Dorsolateral prefrontal cortex (tissue), 120 donors: ENCODE measurements at regions of chr11 and their contacts with region 1.

Region 1: GRCh38 chr11:89613911-89614310 is 96.2 kb upstream of the TRIM77 start:
- DNase-seq: no peak
- H3K4me3 ChIP-seq: peak overlapping the region in 17 of 59 donors; percentile 5 to 47 (median 20)
- H3K27ac ChIP-seq: no peak overlapping the region
- H3K27me3 ChIP-seq: no peaks in the 10 kb centered on the region
- CTCF ChIP-seq: no peak

Region 2: GRCh38 chr11:89327885-89328284 is 286.0 kb before region 1 on chr11:
- intact Hi-C with region 1: loop called in 1 of 2 experiments (anchors 10 kb)
- DNase-seq: no peak
- H3K4me3 ChIP-seq: no peak overlapping the region
- H3K27ac ChIP-seq: no peak overlapping the region
- H3K27me3 ChIP-seq: no peaks in the 10 kb centered on the region
- CTCF ChIP-seq: no peak

Region 3: DNA sequence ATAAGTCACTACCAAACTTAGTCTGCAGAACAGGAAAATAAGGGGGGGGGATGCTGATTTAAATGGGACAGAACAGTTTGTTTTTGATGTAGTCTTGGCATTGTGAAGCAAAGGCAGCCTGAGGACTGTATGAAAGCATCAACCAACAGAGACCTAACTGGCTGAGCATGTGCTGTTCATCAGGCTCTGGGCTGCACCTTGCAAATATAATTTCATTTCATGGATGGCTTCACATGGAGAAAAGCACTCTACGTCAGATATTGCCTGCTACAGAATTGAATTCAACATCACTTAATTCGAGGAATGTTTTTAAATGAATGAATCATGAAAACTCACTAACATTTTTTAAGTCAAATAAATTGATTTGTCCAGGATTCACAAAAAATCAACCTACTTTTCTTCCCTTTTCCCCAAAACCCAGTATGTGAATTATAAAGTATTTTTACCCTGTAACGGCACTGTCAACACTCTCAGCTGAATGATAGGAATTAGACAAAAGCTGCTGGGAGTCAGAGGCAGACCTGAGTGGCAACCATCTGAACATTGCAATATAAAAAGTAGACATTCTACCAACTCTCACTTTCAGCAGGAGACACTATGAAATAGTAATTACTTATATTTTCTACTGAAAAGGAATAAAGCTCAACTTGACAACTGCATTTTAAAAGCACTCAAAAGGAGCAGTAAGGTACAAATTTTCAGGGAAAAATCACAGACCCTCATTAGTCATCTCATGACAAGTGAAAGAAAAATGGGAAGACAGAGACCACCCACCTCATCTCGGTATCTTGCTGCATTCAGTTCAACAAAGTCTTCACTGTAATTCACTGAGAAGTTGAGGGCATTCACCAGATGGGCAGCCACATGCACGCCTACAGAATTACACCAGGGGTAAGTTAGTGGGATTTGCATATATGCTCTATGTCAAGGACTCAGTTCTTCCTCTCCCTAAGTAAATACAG is 170.3 kb before region 1 on chr11:
- intact Hi-C with region 1: no loop called
- DNase-seq: no peak
- H3K4me3 ChIP-seq: no peak overlapping the region
- H3K27ac ChIP-seq: no peak overlapping the region
- H3K27me3 ChIP-seq: no peaks in the 10 kb centered on the region
- CTCF ChIP-seq: no peak